Mammary epithelial cell (primary cell): ENCODE measurements at regions of chrX and their contacts with region 1.

Region 1: GRCh38 chrX:30971774-30972603 is 82.9 kb upstream of the TAB3 start:
- DNase-seq: peak; percentile 37
- H3K4me3 ChIP-seq: peak overlapping the region in 2 of 3 experiments; percentile 14 to 19
- H3K27ac ChIP-seq: no peak overlapping the region
- H3K4me1 ChIP-seq: no peaks in the 10 kb centered on the region
- H3K27me3 ChIP-seq: peaks cover 4% of the 10 kb centered on the region
- CTCF ChIP-seq: peak; percentile 78 to 85

Region 2: GRCh38 chrX:30822068-30822681 is 149.8 kb before region 1 on chrX:
- CTCF ChIA-PET with region 1: no interaction called
- dilution Hi-C with region 1: no loop called
- in situ Hi-C with region 1: no loop called
- intact Hi-C with region 1: no loop called
- DNase-seq: no peak
- H3K4me3 ChIP-seq: no peak overlapping the region
- H3K27ac ChIP-seq: no peak overlapping the region
- H3K4me1 ChIP-seq: no peaks in the 10 kb centered on the region
- H3K27me3 ChIP-seq: no peaks in the 10 kb centered on the region
- CTCF ChIP-seq: peak; percentile 25 to 46

Region 3: GRCh38 chrX:30935985-30936384 is 36.0 kb before region 1 on chrX:
- CTCF ChIA-PET with region 1: interaction called, 3 read pairs
- dilution Hi-C with region 1: loop called (anchors 5 kb)
- in situ Hi-C with region 1: no loop called
- intact Hi-C with region 1: no loop called
- DNase-seq: peak; percentile 19
- H3K4me3 ChIP-seq: no peak overlapping the region
- H3K27ac ChIP-seq: no peak overlapping the region
- H3K4me1 ChIP-seq: no peaks in the 10 kb centered on the region
- H3K27me3 ChIP-seq: no peaks in the 10 kb centered on the region
- CTCF ChIP-seq: peak; percentile 30 to 48